ENCODE measurements at regions of chr6 and their contacts with region 1.

Region 1: GRCh38 chr6:100099189-100100074 is 105.4 kb upstream of the MCHR2 start:
- DNase-seq: no peak
- ATAC-seq: 0 out of 2 replicates have a peak, but pooled peaks have one; percentile 60
- H3K4me3 ChIP-seq: no peak overlapping the region
- H3K27ac ChIP-seq: no peak overlapping the region
- H3K4me1 ChIP-seq: no peaks in the 10 kb centered on the region
- H3K27me3 ChIP-seq: peaks cover 6% of the 10 kb centered on the region
- CTCF ChIP-seq: peak; percentile 43; the same call in 1 of the 2 replicates

Region 2: DNA sequence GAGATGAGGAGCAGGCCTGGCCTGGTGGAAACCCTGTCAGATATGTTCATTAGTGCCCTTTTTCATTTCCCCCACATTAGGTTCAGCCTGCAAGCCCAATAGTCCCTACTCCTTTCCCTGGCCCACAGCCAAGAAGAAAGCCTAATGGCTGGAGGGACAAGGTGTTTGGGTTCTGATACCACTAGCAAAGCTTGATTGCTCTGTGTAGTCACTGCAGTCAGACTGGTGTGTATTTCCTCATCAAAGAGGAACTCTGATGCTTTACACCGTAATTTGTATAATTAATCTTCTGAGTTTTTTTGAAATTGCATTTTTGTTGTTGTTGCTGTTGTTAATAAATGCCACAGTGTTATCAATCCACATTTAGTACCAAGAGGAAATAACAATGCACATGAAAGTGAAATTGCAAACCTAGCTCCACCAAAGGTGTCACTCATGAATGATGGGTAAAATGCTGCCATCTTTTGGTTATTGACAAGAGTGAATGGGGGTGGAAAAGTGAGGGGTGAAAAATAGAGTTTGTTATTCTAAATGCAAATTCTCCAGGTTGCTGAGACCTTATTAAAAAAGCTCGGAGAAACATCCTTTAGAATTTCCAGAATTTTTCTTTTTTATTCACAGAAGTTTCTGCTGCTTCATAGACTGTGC is 1585.2 kb before region 1 on chr6:
- CTCF ChIA-PET with region 1: no interaction called
- POLR2A ChIA-PET with region 1: no interaction called
- in situ Hi-C with region 1: no loop called
- intact Hi-C with region 1: no loop called
- DNase-seq: no peak
- ATAC-seq: no peak
- H3K4me3 ChIP-seq: no peak overlapping the region
- H3K27ac ChIP-seq: no peak overlapping the region
- H3K4me1 ChIP-seq: no peaks in the 10 kb centered on the region
- H3K27me3 ChIP-seq: no peaks in the 10 kb centered on the region
- CTCF ChIP-seq: no peak; the same call in 1 of the 2 replicates

Region 3: GRCh38 chr6:99802396-99803031 is 296.9 kb before region 1 on chr6:
- CTCF ChIA-PET with region 1: no interaction called
- POLR2A ChIA-PET with region 1: no interaction called
- in situ Hi-C with region 1: no loop called
- intact Hi-C with region 1: no loop called
- DNase-seq: no peak
- ATAC-seq: no peak
- H3K4me3 ChIP-seq: no peak overlapping the region
- H3K27ac ChIP-seq: no peak overlapping the region
- H3K4me1 ChIP-seq: no peaks in the 10 kb centered on the region
- H3K27me3 ChIP-seq: peaks cover 6% of the 10 kb centered on the region
- CTCF ChIP-seq: peak; percentile 27

Region 4: GRCh38 chr6:99868074-99868702 is 231.2 kb before region 1 on chr6:
- CTCF ChIA-PET with region 1: interaction called, 5 read pairs
- POLR2A ChIA-PET with region 1: no interaction called
- in situ Hi-C with region 1: no loop called
- intact Hi-C with region 1: loop called (anchors 1 kb)
- DNase-seq: peak; percentile 33
- ATAC-seq: peak; percentile 95
- H3K4me3 ChIP-seq: no peak overlapping the region
- H3K27ac ChIP-seq: no peak overlapping the region
- H3K4me1 ChIP-seq: no peaks in the 10 kb centered on the region
- H3K27me3 ChIP-seq: peaks cover 22% of the 10 kb centered on the region
- CTCF ChIP-seq: peak; percentile 91

Region 5: GRCh38 chr6:99960027-99960426 is 139.4 kb before region 1 on chr6:
- CTCF ChIA-PET with region 1: no interaction called
- POLR2A ChIA-PET with region 1: no interaction called
- in situ Hi-C with region 1: no loop called
- intact Hi-C with region 1: no loop called
- DNase-seq: no peak
- ATAC-seq: no peak
- H3K4me3 ChIP-seq: no peak overlapping the region
- H3K27ac ChIP-seq: no peak overlapping the region
- H3K4me1 ChIP-seq: no peaks in the 10 kb centered on the region
- H3K27me3 ChIP-seq: no peaks in the 10 kb centered on the region
- CTCF ChIP-seq: no peak

Region 6: GRCh38 chr6:100001915-100002388 is 97.5 kb before region 1 on chr6:
- CTCF ChIA-PET with region 1: interaction called, 4 read pairs
- POLR2A ChIA-PET with region 1: no interaction called
- in situ Hi-C with region 1: no loop called
- intact Hi-C with region 1: loop called (anchors 1 kb)
- DNase-seq: peak; percentile 55
- ATAC-seq: peak; percentile 90
- H3K4me3 ChIP-seq: no peak overlapping the region
- H3K27ac ChIP-seq: no peak overlapping the region
- H3K4me1 ChIP-seq: no peaks in the 10 kb centered on the region
- H3K27me3 ChIP-seq: peaks cover 23% of the 10 kb centered on the region
- CTCF ChIP-seq: peak; percentile 95